Activated T-helper 1 cell treated with anti-CD3 and anti-CD28 coated beads, Interleukin-12 subunit alpha, Interleukin-12 subunit beta, Interleukin-2, Interleukin-4 antibody, amounts not matched to agents 30 ng/mL and 10 ng/mL and 1 ng/mL, durations not matched to agents 14 hours and 24 hours and 36 hours (primary cell): ENCODE measurements at regions of chr3 and their contacts with region 1.

Region 1: DNA sequence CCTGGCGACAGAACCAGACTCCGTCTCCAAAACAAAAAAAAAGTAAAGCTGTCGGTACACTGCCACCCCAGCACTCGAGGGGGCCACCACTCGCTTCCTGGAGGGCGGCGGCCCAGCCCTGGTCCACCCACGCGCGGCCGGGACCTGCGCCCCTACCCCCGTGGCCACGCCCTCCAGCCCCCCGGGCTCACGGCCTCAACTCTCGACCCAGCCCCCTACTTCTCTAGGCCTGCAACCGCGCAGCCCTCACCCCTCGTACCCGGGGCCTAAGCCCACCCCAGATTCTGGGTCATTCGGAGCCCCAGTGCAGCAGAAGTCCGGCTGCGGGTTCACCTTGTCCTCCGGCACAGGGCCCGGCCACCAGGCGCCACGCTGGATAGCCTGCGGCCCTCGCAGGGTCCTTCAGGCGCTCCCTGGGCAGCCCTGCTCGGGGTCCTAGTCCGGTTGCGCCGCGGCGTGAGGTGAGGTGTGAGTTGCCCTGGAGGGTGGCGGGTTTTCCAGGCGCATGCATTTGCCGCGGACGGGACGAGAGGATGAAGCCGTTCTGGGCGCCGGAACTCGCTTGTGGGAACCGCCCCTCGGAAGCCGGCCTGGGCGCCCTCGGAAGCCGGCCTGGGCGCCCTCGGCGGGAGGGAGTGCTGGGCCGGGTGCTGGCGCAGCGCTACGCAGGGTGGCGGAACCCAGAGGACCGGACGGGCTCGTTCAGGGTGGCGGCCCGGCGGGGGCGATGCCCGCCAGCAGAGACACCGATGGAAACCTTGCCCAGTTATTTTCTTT is 32.3 kb downstream of the SPINK8 start:
- DNase-seq: peak; percentile 87
- H3K4me3 Mint-ChIP-seq: peak within 1 kb of the TSS; percentile 95
- H3K27ac Mint-ChIP-seq: peak within 1 kb of the TSS; percentile 98
- H3K4me1 Mint-ChIP-seq: peaks cover 52% of the 10 kb centered on the region
- H3K27me3 Mint-ChIP-seq: peaks cover 11% of the 10 kb centered on the region

Region 2: DNA sequence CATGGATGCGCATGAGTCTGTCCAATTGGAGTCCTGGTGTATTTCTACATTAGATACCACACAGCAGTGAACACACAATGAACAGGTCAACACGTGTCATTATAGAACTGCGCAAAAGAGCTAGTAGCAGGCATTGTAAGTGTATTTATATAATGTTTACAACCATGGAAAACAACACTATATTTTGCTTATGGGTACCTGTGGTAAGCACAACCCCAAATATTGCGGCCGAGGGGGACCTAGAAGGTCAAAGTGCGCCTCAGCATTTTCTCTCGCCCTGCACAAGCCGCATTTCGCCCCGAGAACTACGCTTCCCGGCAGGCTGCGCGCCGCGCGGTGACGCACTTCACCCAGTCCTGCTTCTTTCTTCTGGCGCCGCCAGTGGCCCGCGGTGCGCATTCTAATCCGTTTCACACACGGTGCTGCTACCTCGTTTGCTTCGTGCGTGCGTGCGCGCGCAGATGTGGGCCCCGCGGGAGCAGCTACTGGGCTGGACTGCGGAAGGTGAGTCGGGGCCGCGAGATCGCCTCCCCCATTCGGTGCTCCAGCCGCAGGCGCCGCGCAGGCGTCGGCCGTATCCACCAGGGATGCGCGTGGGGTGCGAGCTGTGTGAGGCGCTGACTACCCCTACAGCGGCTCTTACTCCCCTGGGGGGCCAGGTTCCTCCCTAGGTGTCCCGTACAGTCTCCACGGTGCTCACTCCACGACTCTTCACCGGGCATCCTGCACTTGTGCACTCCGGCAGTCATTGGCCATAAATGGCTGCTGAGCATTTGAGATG is 60.3 kb before region 1 on chr3 and contains the start of gene ZNF589:
- intact Hi-C with region 1: loop called (anchors 1 kb)
- DNase-seq: peak; percentile 93
- H3K4me3 Mint-ChIP-seq: peak within 1 kb of the TSS; percentile 91
- H3K27ac Mint-ChIP-seq: peak within 1 kb of the TSS; percentile 95
- H3K4me1 Mint-ChIP-seq: peaks cover 19% of the 10 kb centered on the region
- H3K27me3 Mint-ChIP-seq: no peaks in the 10 kb centered on the region
- total RNA-seq, gene ZNF589: 33.0 and 34.2 TPM in 2 replicates